BJ (cell line): ENCODE measurements at regions of chr11 and their contacts with region 1.

Region 1: GRCh38 chr11:63938479-63939396 is at the start of gene NAA40:
- DNase-seq: peak; percentile 55
- H3K4me3 ChIP-seq: peak within 1 kb of the TSS; percentile 99
- H3K27me3 ChIP-seq: no peaks in the 10 kb centered on the region
- CTCF ChIP-seq: no peak
- polyA plus RNA-seq, gene NAA40: 10.8 and 16.1 TPM in 2 replicates

Region 2: DNA sequence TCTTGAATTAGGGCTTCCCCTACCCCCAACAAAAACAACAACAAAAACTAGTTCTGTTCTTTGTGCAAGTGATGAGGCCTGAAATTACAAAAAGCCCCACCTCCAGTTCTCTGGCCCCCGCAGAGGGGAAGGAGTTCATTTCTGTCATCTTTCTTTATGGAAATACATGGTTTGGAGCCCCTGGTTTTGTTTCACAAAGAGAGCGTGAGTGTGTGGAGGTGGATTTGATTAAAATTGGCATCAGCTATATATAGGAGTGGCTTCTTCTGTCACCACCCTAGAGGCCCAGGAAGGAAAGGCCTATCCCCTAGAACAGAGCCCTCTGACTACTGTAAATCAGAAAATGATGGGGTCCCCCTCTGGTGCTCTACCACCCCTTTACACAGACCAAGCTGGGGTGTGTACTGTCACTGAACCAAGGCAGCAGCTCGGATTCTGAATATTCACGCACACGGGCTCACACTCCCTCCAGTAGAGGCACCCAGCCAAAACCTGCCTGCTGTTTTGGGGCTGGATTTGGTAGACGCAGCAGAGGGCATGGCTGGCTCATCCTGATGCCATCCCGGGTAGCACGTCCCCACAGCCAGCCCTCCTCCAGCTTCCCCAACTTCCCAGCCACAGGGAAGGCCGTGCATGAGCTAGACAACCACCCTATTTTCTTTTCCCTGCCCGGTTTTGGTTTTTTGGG is 41.1 kb before region 1 on chr11:
- CTCF ChIA-PET with region 1: no interaction called
- POLR2A ChIA-PET with region 1: no interaction called
- DNase-seq: no peak
- H3K4me3 ChIP-seq: no peak overlapping the region
- H3K27me3 ChIP-seq: no peaks in the 10 kb centered on the region
- CTCF ChIP-seq: no peak

Region 3: GRCh38 chr11:64165849-64166635 is 227.3 kb after region 1 on chr11 and contains the start of gene MACROD1:
- CTCF ChIA-PET with region 1: no interaction called
- POLR2A ChIA-PET with region 1: interaction called, 10 read pairs
- DNase-seq: peak; percentile 18
- H3K4me3 ChIP-seq: peak within 1 kb of the TSS; percentile 49
- H3K27me3 ChIP-seq: no peaks in the 10 kb centered on the region
- CTCF ChIP-seq: no peak
- polyA plus RNA-seq, gene MACROD1: 11.7 and 12.4 TPM in 2 replicates